ENCODE measurements at regions of chr3 and their contacts with region 1.

Region 1: DNA sequence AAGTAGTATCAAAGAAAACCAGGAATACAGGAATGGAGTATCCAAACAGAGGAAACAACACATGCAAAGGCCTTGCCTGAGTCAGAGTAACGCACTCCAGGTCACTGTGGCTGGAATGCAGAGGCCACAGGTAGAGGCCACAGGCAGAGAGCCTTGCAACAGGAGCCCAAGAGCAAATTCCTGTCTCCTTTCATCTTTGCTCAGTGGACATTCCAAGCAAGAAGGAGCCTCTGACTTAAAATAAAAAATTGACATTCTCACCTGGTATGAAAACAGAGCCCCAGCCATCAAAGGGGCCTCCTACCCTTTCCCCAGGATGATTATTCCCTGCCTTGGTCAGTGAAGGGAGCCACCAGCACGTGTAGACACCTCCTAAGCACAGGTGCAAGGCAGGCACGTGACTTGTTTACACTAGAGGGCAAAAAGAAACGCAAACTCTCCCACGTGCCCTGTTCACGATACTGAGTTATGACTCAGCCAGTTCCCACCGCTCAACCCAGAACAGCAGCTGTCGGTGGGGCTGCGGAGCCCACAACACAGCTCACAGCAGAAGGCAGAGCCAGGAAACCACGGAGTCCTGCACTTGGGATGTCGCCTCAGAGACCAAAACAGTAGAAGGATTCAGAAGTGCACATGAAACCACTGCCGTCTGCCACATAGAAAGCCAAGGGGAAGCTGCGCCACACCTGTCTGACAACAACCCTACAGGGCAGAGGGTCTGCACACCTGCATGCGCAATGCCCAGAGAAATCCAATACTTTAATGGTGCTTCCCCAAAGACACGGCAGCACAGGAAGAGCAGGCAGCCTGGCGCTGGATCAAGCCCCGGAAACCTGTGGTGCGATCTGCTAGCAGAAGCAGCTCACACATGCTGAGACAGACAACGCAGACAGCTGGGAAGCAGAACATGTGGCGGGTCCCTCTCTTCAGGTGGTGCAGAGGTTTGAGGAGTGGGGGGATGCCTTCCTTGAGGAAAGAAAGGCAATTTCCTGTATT is 52.1 kb downstream of the ITGB5 start:
- DNase-seq: peak; percentile 61 to 91
- ATAC-seq: peak; percentile 36 to 37
- H3K4me3 ChIP-seq: peak overlapping the region; percentile 22; the same call in 1 of the 3 replicates
- H3K27ac ChIP-seq: peak overlapping the region; percentile 93 to 94
- H3K4me1 ChIP-seq: peaks cover 85% of the 10 kb centered on the region
- CTCF ChIP-seq: no peak
- EP300 ChIP-seq: peak; percentile 8 to 84; a peak in 2 of 5 replicates
- POLR2A ChIP-seq: no peak
- RAD21 ChIP-seq: peak in 1 of 2 experiments; percentile 5; a peak in 2 of 5 replicates

Region 2: GRCh38 chr3:124752051-124752450 is 83.0 kb before region 1 on chr3:
- CTCF ChIA-PET with region 1: no interaction called
- POLR2A ChIA-PET with region 1: no interaction called
- DNase-seq: no peak
- ATAC-seq: peak in 1 of 2 experiments; percentile 48; a peak in 3 of 6 replicates
- H3K4me3 ChIP-seq: no peak overlapping the region
- H3K27ac ChIP-seq: no peak overlapping the region
- H3K4me1 ChIP-seq: 0 out of 3 replicates have a peak, but pooled peaks cover 5% of the 10 kb centered on the region
- CTCF ChIP-seq: no peak
- EP300 ChIP-seq: no peak
- POLR2A ChIP-seq: no peak
- RAD21 ChIP-seq: no peak

Region 3: DNA sequence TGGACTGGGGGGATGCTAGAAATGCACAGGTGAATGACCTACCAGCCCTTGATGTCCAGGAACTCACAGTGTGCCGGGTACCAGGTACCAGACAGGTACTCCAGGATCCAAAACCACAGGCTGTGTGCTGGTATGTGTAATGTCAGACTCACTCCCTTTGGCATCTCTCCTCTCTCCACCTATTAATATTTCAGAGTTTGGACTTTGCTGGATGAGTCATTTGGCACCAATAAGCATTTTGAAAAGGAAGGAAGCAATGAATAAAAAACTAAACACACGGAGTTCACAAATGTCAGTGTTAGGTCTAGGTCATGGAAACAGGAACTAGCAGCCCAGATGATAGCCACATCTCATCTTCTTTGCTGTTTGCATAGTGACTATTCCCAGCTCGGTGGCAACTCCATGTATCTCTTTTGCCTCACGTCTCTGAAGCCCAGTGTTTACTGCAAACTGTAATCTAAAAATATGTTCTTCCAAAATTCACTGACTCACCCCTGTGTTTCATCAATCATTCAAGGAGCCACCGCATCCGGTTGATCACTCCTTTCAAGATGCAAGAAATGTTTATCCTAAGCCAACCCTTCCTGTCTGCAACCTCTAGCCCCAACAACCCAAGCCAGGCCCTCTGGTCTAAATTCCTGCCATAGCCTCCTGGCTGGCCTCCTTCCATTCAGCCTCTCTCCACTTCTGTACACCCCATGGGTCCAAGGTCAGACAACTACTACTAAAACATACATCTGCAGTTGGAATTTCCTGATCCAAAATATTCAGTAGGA is 43.7 kb after region 1 on chr3:
- CTCF ChIA-PET with region 1: interaction called, 3 read pairs
- POLR2A ChIA-PET with region 1: interaction called, 18 read pairs
- DNase-seq: peak; percentile 92 to 98
- ATAC-seq: peak; percentile 95 to 98
- H3K4me3 ChIP-seq: peak overlapping the region; percentile 22; the same call in 1 of the 3 replicates
- H3K27ac ChIP-seq: peak overlapping the region; percentile 91 to 99
- H3K4me1 ChIP-seq: peaks cover 83% of the 10 kb centered on the region
- CTCF ChIP-seq: no peak
- EP300 ChIP-seq: peak; percentile 95 to 98
- POLR2A ChIP-seq: no peak
- RAD21 ChIP-seq: peak; percentile 25 to 60

Region 4: DNA sequence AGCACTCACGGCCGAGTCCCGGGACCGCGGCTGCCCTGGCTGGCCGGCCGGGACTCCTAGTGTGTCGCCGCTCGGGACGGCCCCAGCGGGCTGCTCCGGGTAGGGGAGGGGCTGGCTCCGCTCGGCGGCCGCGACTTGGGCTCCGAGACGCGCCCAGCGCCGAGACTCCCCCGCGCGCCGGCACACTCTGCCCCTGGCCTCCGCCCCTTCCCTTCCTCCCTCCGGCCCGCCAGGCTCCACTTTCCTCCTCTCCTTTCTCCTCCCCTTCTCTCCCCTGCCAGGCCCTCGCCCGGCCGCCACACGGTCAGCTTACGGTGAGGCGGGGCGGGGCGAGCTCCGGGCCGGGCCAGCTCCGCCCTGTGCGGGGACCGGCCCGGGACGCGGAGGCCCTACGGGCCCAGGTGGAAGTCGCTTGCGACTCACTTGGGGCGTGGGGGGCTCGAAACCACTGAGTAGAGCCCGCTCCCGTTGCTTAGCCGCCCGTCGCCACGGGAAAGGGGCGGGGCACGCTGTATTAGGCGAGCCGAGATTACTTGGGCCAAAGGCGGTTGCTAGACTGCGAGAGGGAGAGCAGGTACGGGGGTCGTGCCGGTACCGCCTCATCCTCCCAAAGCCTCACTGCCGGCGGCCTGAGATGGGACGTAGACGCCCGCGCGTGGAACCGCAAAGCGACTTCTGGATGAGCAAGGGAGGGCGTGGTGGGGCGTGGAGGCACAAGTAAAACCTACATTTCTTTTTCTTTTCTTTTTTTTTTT is 52.3 kb after region 1 on chr3 and contains the start of gene ITGB5:
- CTCF ChIA-PET with region 1: no interaction called
- POLR2A ChIA-PET with region 1: interaction called, 13 read pairs
- DNase-seq: peak; percentile 53 to 88
- ATAC-seq: peak; percentile 84 to 89
- H3K4me3 ChIP-seq: peak within 1 kb of the TSS; percentile 60
- H3K27ac ChIP-seq: peak within 1 kb of the TSS; percentile 90 to 99
- H3K4me1 ChIP-seq: peaks cover 41% of the 10 kb centered on the region
- CTCF ChIP-seq: no peak
- EP300 ChIP-seq: no peak
- POLR2A ChIP-seq: peak; percentile 68
- RAD21 ChIP-seq: no peak; a peak in 1 of 5 replicates
- polyA plus RNA-seq, gene ITGB5: 260 and 476 TPM in 2 replicates

Region 5: DNA sequence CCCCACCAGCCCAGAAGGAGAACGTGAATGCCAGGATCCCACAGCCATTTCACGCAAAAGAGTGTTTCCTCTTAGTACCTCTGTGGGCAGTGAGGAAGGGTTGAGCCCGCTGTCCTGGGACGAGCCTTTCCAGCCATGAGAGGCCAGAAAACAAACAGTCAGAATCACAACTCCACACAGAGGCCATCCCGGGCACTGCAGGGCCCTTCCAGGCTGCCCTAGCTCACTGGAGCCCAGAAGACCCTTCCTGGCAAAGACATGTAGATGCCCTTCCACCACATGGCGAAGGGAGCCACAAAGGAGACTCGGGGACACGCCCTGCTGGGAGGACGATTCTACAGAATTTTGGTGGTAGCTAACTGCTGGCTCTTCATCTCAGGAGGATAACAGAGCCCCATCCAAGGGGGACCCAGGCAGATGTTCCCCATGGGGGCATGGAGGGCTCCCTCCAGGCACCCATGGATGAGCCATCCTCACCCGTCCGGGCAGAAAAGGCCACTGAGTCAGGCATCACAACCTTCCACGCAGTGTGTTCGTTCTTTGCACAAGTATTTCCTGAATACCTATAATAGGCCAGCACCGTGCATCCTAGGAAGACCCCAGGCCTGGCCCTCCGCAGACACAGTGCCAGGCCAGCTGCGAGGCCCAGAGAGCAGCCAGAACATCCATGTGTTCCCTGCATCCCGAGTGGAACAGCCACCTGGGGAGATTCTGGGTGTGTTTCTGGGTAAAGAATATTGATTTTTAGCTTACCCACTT is 330.3 kb after region 1 on chr3:
- CTCF ChIA-PET with region 1: no interaction called
- POLR2A ChIA-PET with region 1: no interaction called
- DNase-seq: peak in 1 of 2 experiments; percentile 13
- ATAC-seq: peak; percentile 80 to 92
- H3K4me3 ChIP-seq: no peak overlapping the region
- H3K27ac ChIP-seq: no peak overlapping the region
- H3K4me1 ChIP-seq: no peaks in the 10 kb centered on the region
- CTCF ChIP-seq: no peak; the same call in 2 of the 3 replicates
- EP300 ChIP-seq: no peak
- POLR2A ChIP-seq: no peak
- RAD21 ChIP-seq: peak; percentile 30 to 37; a peak in 2 of 5 replicates